H1 (cell line): ENCODE measurements at regions of chrX and their contacts with region 1.

Region 1: DNA sequence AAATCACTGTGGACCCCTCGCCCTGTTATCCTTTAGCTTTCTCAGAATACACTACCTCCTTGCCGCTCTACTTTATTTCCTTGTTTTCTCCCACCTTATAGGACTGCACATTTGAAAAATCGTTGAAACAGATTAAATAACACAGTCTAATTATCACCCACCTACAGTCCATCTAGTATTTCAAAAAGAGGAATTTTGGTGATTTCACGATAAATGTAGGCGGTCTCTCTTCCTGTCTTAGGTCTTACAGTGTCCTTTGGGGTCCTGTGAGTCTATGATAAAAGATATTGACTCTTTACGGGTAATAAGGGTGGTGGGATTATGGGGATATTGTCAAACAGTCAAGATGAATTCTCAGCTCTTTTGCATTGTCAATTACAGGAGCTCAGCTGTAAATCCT is 2.4 kb upstream of the TBL1X start:
- DNase-seq: no peak
- H3K4me3 ChIP-seq: no peak overlapping the region
- H3K27ac ChIP-seq: no peak overlapping the region
- H3K4me1 ChIP-seq: peaks cover 0 to 8% (median 0%) of the 10 kb centered on the region in 4 experiments; a peak in 2 of 7 replicates
- H3K27me3 ChIP-seq: no peaks in the 10 kb centered on the region
- CTCF ChIP-seq: no peak
- EP300 ChIP-seq: no peak
- POLR2A ChIP-seq: no peak
- RAD21 ChIP-seq: no peak

Region 2: DNA sequence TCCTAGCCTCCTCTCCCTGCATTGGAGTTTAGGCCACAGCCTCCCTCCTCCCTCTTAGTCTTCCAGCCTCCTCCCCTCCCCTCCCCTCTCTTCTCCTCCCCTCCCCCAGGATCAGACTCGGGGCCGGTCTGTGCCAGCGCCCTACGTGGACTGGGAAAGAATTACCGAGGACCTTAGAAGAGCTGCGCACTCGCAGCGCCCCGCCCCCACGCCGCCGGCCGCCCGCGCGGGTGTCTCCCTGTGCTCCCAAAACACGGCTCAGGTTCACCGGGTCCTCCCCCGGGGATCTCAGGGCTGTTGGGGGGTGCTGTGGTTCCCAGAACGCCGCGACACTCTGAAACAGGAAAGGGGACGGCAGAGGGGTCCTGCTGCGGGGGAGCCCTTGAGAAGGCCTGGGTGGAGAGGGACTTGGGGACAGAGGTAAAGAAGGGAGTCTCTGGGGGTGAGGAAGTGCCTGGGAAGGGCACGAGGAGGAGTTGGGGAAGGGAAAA is 119.8 kb before region 1 on chrX:
- CTCF ChIA-PET with region 1: no interaction called
- POLR2A ChIA-PET with region 1: interaction called, 11 read pairs
- DNase-seq: peak; percentile 46 to 77
- H3K4me3 ChIP-seq: peak overlapping the region; percentile 17 to 75 (median 44); a peak in 7 of 8 replicates
- H3K27ac ChIP-seq: no peak overlapping the region
- H3K4me1 ChIP-seq: peaks cover 0 to 9% (median 2%) of the 10 kb centered on the region in 4 experiments; a peak in 4 of 7 replicates
- H3K27me3 ChIP-seq: no peaks in the 10 kb centered on the region
- CTCF ChIP-seq: no peak
- EP300 ChIP-seq: peak; percentile 6 to 51; a peak in 2 of 3 replicates
- POLR2A ChIP-seq: no peak
- RAD21 ChIP-seq: peak; percentile 13 to 26; a peak in 3 of 4 replicates

Region 3: GRCh38 chrX:9379697-9380551 is 82.5 kb before region 1 on chrX:
- CTCF ChIA-PET with region 1: no interaction called
- POLR2A ChIA-PET with region 1: no interaction called
- DNase-seq: no peak
- H3K4me3 ChIP-seq: no peak overlapping the region
- H3K27ac ChIP-seq: no peak overlapping the region
- H3K4me1 ChIP-seq: no peaks in the 10 kb centered on the region
- H3K27me3 ChIP-seq: no peaks in the 10 kb centered on the region
- CTCF ChIP-seq: no peak
- EP300 ChIP-seq: no peak
- POLR2A ChIP-seq: no peak
- RAD21 ChIP-seq: no peak